Activated CD4-positive, alpha-beta T cell treated with anti-CD3 and anti-CD28 coated beads for 36 hours (primary cell): ENCODE measurements at regions of chr6 and their contacts with region 1.

Region 1: GRCh38 chr6:4543596-4543995 is 232.6 kb upstream of the CDYL start:
- DNase-seq: no peak
- ATAC-seq: no peak
- H3K4me3 Mint-ChIP-seq: no peak overlapping the region
- H3K27ac Mint-ChIP-seq: no peak overlapping the region
- H3K4me1 Mint-ChIP-seq: no peaks in the 10 kb centered on the region
- H3K27me3 Mint-ChIP-seq: peaks cover 9% of the 10 kb centered on the region

Region 2: GRCh38 chr6:5072440-5072839 is 528.8 kb after region 1 on chr6:
- CTCF ChIA-PET with region 1: no interaction called
- POLR2A ChIA-PET with region 1: no interaction called
- intact Hi-C with region 1: loop called in 1 of 2 experiments (anchors 5 kb)
- DNase-seq: peak; percentile 25
- ATAC-seq: peak; percentile 42
- H3K4me3 Mint-ChIP-seq: no peak overlapping the region
- H3K27ac Mint-ChIP-seq: no peak overlapping the region
- H3K4me1 Mint-ChIP-seq: peaks cover 3% of the 10 kb centered on the region
- H3K27me3 Mint-ChIP-seq: peaks cover 2% of the 10 kb centered on the region